Left lung (tissue), 14 donors: ENCODE measurements at regions of chr15 and their contacts with region 1.

Region 1: DNA sequence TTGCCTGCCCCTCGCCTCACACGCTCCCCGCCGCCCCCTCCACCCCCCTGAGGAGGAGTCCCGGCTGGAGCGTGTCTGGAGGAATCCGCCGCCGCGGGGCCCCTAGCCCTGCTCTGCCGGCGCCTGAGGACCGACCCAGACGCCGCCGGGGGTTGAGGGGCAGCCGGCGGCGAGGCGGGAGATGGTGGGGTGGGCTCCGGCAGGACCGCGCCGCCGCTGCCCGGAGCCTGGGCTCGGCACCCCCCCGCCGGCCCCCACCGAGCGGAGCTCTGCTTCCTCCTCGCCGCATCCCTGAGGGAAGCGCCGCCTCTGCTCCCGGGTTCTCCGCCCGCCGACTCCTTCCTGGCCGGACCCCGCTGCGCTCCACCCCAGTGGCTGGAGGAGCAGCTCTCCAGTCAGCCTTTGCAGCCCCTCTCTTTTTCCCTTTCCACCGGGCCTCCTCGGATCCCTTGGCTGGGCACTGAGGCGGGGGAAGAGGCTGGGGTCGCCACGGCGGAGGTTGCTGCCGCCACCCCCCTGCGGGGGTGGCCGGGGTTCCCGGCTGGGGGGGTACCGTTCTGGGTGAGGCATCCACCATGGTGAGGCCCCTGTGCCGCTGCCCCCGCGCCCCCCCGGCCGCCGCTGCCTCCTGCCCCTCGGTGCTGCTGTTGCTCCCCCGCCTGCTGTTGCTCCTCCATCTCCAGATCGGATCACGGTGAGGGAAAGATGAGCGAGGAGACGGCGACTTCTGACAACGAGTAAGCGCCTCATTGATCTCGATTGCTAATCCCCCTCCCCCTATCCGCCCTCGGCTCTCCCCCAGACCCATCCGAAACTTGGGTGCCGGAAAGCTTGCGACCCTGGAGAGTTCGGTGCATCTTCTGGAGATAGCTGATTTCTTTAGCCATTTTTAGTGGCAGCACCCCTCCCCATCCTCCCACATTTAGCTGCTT is at the start of gene SPRED1:
- DNase-seq: peak; percentile 68 to 88 (median 75)
- ATAC-seq: peak; percentile 62
- H3K4me3 ChIP-seq: peak within 1 kb of the TSS; percentile 80 to 81
- H3K27ac ChIP-seq: peak within 1 kb of the TSS; percentile 97 to 99
- H3K4me1 ChIP-seq: peaks cover 8 to 27% of the 10 kb centered on the region in 2 donors
- H3K27me3 ChIP-seq: peaks cover 0 to 30% of the 10 kb centered on the region in 2 donors
- CTCF ChIP-seq: no peak
- polyA plus RNA-seq, gene SPRED1: 36.3 to 46.9 (median 43.0) TPM

Region 2: GRCh38 chr15:38072348-38073177 is 180.2 kb before region 1 on chr15:
- intact Hi-C with region 1: loop called in 1 of 2 experiments (anchors 5 kb)
- DNase-seq: peak; percentile 62 to 88 (median 80)
- ATAC-seq: peak; percentile 76
- H3K4me3 ChIP-seq: peak overlapping the region; percentile 40 to 42
- H3K27ac ChIP-seq: peak overlapping the region; percentile 91 to 96
- H3K4me1 ChIP-seq: peaks cover 22 to 60% of the 10 kb centered on the region in 2 donors
- H3K27me3 ChIP-seq: peaks cover 0 to 11% of the 10 kb centered on the region in 2 donors
- CTCF ChIP-seq: peak in 1 of 2 donors; percentile 9